IMR-90 (cell line): ENCODE measurements at regions of chr7 and their contacts with region 1.

Region 1: DNA sequence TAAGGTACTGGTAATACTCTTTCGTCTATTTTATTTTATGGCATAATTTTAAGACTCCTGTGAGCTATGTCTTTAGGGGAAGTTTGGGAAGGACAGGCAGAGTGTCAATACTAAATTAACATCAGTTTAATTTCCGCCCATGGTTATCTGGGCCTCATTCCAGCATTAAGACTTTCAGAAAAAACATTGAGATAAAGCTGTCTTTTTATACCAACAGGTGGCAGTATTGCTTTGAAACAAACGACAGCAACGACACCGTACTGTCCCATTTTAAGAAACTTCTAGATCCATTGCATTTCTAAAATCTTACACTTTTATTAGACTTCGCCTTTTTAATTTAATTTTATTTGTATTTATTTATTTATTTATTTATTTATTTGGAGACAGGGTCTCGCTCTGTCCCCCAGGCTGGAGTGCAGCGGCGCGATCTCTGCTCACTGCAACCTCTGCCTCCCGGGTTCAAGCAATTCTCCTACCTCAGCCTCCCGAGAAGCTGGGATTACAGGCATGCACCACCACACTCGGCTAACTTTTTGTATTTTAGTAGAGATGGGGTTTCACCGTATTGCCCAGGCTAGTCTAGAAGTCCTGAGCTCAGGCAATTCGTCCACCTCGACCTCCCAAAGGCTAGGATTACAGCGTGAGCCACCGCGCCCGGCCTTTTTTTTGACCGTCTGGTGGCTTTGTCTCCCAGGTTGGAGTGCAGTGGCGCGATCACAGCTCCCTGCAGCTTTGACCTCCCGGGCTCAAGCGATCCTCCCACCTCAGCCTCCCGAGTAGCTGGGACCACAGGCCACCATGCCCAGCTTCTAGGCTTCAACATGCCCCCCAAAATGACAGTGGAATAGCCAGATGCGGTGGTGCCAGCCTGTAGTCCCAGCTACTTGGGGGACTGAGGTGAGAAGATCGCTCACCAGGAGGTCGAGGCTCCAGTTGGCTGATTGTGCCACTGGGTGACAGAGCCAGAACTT is 78.7 kb upstream of the C1GALT1 start:
- DNase-seq: peak; percentile 74
- ATAC-seq: peak; percentile 53; the same call in 1 of the 2 replicates
- H3K4me3 ChIP-seq: no peak overlapping the region
- H3K27ac ChIP-seq: no peak overlapping the region
- H3K4me1 ChIP-seq: peaks cover 2% of the 10 kb centered on the region; the same call in 1 of the 2 replicates
- H3K27me3 ChIP-seq: no peaks in the 10 kb centered on the region
- CTCF ChIP-seq: peak; percentile 74
- POLR2A ChIP-seq: no peak
- RAD21 ChIP-seq: peak; percentile 74

Region 2: GRCh38 chr7:7182156-7183060 is 78.8 kb after region 1 on chr7 and contains the start of gene C1GALT1:
- CTCF ChIA-PET with region 1: interaction called, 3 read pairs
- POLR2A ChIA-PET with region 1: no interaction called
- dilution Hi-C with region 1: no loop called
- in situ Hi-C with region 1: no loop called
- intact Hi-C with region 1: loop called (anchors 2 kb)
- DNase-seq: peak; percentile 97
- ATAC-seq: peak; percentile 97
- H3K4me3 ChIP-seq: peak within 1 kb of the TSS; percentile 77
- H3K27ac ChIP-seq: peak within 1 kb of the TSS; percentile 72
- H3K4me1 ChIP-seq: peaks cover 3% of the 10 kb centered on the region; the same call in 1 of the 2 replicates
- H3K27me3 ChIP-seq: no peaks in the 10 kb centered on the region
- CTCF ChIP-seq: peak; percentile 56
- POLR2A ChIP-seq: peak; percentile 77
- RAD21 ChIP-seq: peak; percentile 43
- total RNA-seq, gene C1GALT1: 12.2 and 23.1 TPM in 2 replicates

Region 3: DNA sequence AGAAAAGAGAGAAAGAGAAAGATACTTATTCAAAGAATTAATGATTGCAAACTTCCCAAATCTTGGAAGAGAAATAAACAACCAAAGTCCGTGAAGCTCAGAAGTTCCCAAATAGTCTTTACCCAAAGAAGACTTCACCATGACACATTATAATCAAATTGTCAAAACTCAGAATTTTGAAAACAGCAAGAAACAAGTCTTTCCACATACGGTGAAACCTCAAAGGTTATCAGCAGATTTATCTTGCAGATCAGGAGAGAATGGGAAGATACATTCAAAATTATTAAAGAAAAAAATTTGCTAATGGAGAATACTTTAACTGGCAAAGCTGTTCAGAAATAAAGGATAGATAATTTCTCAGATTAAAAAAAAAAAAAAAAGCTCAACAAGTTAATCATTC is 179.8 kb after region 1 on chr7:
- CTCF ChIA-PET with region 1: no interaction called
- POLR2A ChIA-PET with region 1: no interaction called
- dilution Hi-C with region 1: no loop called
- in situ Hi-C with region 1: no loop called
- intact Hi-C with region 1: loop called (anchors 10 kb)
- DNase-seq: no peak
- ATAC-seq: no peak
- H3K4me3 ChIP-seq: no peak overlapping the region
- H3K27ac ChIP-seq: no peak overlapping the region
- H3K4me1 ChIP-seq: no peaks in the 10 kb centered on the region
- H3K27me3 ChIP-seq: no peaks in the 10 kb centered on the region
- CTCF ChIP-seq: no peak
- POLR2A ChIP-seq: no peak
- RAD21 ChIP-seq: no peak

Region 4: GRCh38 chr7:7416031-7416858 is 312.6 kb after region 1 on chr7:
- CTCF ChIA-PET with region 1: interaction called, 3 read pairs
- POLR2A ChIA-PET with region 1: no interaction called
- dilution Hi-C with region 1: no loop called
- in situ Hi-C with region 1: loop called (anchors 10 kb)
- intact Hi-C with region 1: loop called (anchors 2 kb)
- DNase-seq: peak; percentile 45
- ATAC-seq: peak; percentile 67
- H3K4me3 ChIP-seq: no peak overlapping the region
- H3K27ac ChIP-seq: no peak overlapping the region
- H3K4me1 ChIP-seq: no peaks in the 10 kb centered on the region
- H3K27me3 ChIP-seq: no peaks in the 10 kb centered on the region; the same call in 1 of the 2 replicates
- CTCF ChIP-seq: no peak
- POLR2A ChIP-seq: no peak
- RAD21 ChIP-seq: no peak

Region 5: GRCh38 chr7:7535691-7536090 is 432.1 kb after region 1 on chr7 and contains the start of gene COL28A1:
- CTCF ChIA-PET with region 1: interaction called, 3 read pairs
- POLR2A ChIA-PET with region 1: no interaction called
- dilution Hi-C with region 1: no loop called
- in situ Hi-C with region 1: loop called (anchors 5 kb)
- intact Hi-C with region 1: loop called (anchors 2 kb)
- DNase-seq: no peak
- ATAC-seq: no peak
- H3K4me3 ChIP-seq: no peak within 1 kb of the TSS
- H3K27ac ChIP-seq: no peak within 1 kb of the TSS
- H3K4me1 ChIP-seq: no peaks in the 10 kb centered on the region
- H3K27me3 ChIP-seq: no peaks in the 10 kb centered on the region
- CTCF ChIP-seq: no peak
- POLR2A ChIP-seq: no peak
- RAD21 ChIP-seq: no peak
- total RNA-seq, gene COL28A1: under 0.01 TPM in 2 replicates

Region 6: DNA sequence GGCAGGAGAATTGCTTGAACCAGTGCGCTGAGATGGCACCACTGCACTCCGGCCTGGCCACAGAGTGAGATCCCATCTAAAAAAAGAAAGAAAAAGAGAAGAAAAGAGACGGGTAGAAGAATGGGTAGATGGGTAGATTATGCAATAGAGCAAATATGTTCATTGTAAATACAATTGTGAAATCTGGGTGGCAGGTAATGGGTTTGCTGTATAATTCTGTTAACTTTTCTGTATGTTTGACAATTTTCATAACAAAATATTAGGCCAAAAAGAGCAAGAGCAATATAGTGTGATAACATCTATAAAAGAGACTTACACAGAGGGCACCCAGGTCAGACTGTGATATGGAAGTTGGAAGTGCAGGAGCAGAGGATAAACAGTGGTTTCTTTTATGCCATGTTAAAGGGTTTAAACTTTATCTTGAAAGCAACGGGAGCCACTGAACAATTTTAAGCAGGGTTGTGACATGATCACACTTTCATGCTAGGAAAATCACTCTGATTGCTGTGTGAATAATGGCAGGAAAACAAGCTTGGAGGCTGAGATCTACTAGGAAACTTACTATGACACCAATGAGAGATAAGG is 438.7 kb after region 1 on chr7:
- CTCF ChIA-PET with region 1: interaction called, 3 read pairs
- POLR2A ChIA-PET with region 1: no interaction called
- dilution Hi-C with region 1: no loop called
- in situ Hi-C with region 1: loop called (anchors 5 kb)
- intact Hi-C with region 1: loop called (anchors 2 kb)
- DNase-seq: no peak
- ATAC-seq: no peak
- H3K4me3 ChIP-seq: no peak overlapping the region
- H3K27ac ChIP-seq: no peak overlapping the region
- H3K4me1 ChIP-seq: no peaks in the 10 kb centered on the region
- H3K27me3 ChIP-seq: no peaks in the 10 kb centered on the region
- CTCF ChIP-seq: no peak
- POLR2A ChIP-seq: no peak
- RAD21 ChIP-seq: no peak

Region 7: DNA sequence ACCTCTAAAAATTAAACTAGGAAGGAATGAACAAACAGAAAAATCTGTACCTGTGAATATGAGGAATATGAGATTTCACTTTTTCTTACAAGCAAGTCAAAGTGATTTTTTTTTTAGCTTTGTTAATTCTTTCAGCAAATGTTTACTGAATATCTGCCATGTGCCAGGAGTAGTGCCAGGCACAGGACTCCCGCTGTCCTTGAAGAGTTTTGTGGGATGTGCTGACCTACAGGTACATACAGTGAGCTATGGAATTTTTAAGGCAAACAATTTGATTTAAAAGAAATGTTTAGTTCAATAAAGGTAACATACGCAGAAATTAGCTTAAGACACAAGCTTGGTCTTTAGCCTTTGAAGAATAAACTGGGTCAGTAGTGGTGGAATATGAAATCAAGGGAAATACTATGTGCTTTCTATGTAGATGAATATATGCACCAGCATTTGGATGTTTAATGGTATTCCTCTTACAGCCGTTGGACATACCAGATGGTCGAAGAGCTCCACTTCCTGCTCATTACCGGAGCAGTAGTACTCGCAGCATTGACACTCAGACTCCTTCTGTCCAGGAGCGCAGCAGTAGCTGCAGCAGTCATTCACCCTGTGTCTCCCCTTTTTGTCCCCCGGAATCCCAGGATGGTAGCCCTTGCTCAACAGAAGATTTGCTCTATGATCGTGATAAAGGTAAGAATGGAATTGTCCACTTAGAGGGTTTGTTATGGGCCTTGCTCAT is 967.0 kb after region 1 on chr7:
- CTCF ChIA-PET with region 1: no interaction called
- POLR2A ChIA-PET with region 1: no interaction called
- dilution Hi-C with region 1: no loop called
- in situ Hi-C with region 1: no loop called
- intact Hi-C with region 1: loop called (anchors 10 kb)
- DNase-seq: no peak
- ATAC-seq: no peak
- H3K4me3 ChIP-seq: no peak overlapping the region
- H3K27ac ChIP-seq: no peak overlapping the region
- H3K4me1 ChIP-seq: peaks cover 1% of the 10 kb centered on the region; the same call in 1 of the 2 replicates
- H3K27me3 ChIP-seq: no peaks in the 10 kb centered on the region
- CTCF ChIP-seq: no peak
- POLR2A ChIP-seq: no peak
- RAD21 ChIP-seq: no peak

Region 8: GRCh38 chr7:8560501-8560900 is 1456.9 kb after region 1 on chr7:
- CTCF ChIA-PET with region 1: no interaction called
- POLR2A ChIA-PET with region 1: no interaction called
- dilution Hi-C with region 1: no loop called
- in situ Hi-C with region 1: no loop called
- intact Hi-C with region 1: no loop called
- DNase-seq: no peak
- ATAC-seq: no peak
- H3K4me3 ChIP-seq: no peak overlapping the region
- H3K27ac ChIP-seq: no peak overlapping the region
- H3K4me1 ChIP-seq: no peaks in the 10 kb centered on the region
- H3K27me3 ChIP-seq: no peaks in the 10 kb centered on the region
- CTCF ChIP-seq: no peak
- POLR2A ChIP-seq: no peak
- RAD21 ChIP-seq: no peak